Activated naive CD4-positive, alpha-beta T cell treated with anti-CD3 and anti-CD28 coated beads for 36 hours (primary cell): ENCODE measurements at regions of chr6 and their contacts with region 1.

Region 1: GRCh38 chr6:87322304-87323212 is at the start of gene SMIM8:
- DNase-seq: peak; percentile 86
- H3K4me3 Mint-ChIP-seq: peak within 1 kb of the TSS; percentile 98
- H3K27ac Mint-ChIP-seq: peak within 1 kb of the TSS; percentile 85
- H3K4me1 Mint-ChIP-seq: peaks cover 18% of the 10 kb centered on the region
- H3K27me3 Mint-ChIP-seq: no peaks in the 10 kb centered on the region
- total RNA-seq, gene SMIM8: 8.0 to 8.6 TPM

Region 2: DNA sequence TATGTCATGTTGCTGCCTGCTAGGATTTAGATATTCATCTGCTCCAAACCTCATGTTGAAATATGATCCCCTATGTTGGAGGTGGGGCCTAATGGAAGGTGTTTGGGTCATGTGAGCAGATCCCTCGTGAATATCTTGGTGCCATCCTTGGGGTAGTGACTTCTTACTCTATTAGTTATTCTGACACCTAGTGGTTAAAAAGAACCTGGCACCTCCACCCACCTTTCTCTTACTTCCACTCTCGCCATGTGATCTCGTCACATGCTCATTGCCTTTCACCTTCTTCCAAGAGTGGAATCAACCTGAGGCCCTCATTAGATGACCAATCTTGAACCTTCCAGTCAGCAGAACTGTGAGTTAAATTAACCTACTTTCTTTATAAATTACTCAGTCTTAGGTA is 1130.4 kb before region 1 on chr6:
- CTCF ChIA-PET with region 1: no interaction called
- intact Hi-C with region 1: no loop called
- DNase-seq: no peak
- H3K4me3 Mint-ChIP-seq: no peak overlapping the region
- H3K27ac Mint-ChIP-seq: no peak overlapping the region
- H3K4me1 Mint-ChIP-seq: no peaks in the 10 kb centered on the region
- H3K27me3 Mint-ChIP-seq: no peaks in the 10 kb centered on the region

Region 3: DNA sequence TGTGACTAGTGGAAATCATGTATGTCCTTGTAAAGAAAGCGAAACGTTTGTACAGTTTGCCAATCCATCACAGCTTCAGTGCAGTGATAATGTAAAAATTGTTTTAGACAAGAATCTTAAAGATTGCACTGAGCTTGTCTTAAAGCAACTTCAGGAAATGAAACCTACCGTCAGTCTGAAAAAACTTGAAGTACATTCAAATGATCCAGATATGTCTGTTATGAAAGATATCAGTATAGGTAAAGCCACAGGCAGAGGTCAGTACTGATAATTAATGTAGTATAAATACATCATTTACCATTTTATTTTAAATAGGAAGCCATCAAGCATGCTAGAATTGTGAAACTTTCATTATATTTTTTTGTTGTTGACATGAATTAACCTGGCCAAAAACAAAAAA is 61.0 kb before region 1 on chr6:
- CTCF ChIA-PET with region 1: interaction called, 4 read pairs
- intact Hi-C with region 1: loop called (anchors 1 kb)
- DNase-seq: no peak
- H3K4me3 Mint-ChIP-seq: no peak overlapping the region
- H3K27ac Mint-ChIP-seq: no peak overlapping the region
- H3K4me1 Mint-ChIP-seq: peaks cover 15% of the 10 kb centered on the region
- H3K27me3 Mint-ChIP-seq: no peaks in the 10 kb centered on the region

Region 4: DNA sequence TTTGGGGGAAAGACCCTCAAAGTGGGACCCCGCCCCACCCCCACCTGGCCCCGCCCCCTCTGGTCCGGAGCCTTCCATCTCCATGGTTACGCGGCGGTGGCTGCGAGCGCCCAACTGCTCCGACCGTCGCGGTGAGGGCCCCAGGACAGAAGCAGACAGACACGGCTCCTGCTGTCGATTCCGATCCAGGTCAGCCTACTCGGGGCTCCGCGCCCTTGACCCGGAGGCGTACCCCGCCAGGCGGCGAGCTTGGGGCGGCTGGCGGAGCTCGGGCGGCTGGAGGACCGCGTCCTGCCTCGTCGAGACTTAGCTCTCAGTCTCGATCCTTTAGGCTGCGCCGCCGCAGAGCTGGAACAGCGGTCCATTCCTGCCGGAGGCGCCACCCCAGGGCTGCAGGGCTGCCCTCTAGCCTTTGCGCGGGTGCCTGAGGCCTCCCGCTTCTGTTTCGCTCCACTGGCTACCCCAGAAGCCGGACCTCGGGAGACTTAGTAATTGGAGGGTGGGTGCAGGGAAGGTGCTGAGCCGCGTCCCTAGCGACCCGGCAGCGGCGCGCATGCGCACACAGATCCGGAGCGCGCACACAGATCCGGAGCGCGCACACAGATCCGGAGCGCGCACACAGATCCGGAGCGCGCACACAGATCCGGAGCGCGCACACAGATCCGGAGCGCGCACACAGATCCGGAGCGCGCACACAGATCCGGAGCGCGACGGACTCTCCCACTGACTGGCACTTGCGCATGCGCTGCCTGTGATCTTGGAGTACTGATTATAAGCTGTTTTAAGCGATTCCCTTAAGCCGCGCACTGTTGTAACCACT is 85.6 kb after region 1 on chr6 and contains the start of gene CFAP206:
- CTCF ChIA-PET with region 1: interaction called, 3 read pairs
- intact Hi-C with region 1: loop called (anchors 1 kb)
- DNase-seq: peak; percentile 81
- H3K4me3 Mint-ChIP-seq: peak within 1 kb of the TSS; percentile 84
- H3K27ac Mint-ChIP-seq: no peak within 1 kb of the TSS
- H3K4me1 Mint-ChIP-seq: no peaks in the 10 kb centered on the region
- H3K27me3 Mint-ChIP-seq: peaks cover 11% of the 10 kb centered on the region
- total RNA-seq, gene CFAP206: not detected

Region 5: DNA sequence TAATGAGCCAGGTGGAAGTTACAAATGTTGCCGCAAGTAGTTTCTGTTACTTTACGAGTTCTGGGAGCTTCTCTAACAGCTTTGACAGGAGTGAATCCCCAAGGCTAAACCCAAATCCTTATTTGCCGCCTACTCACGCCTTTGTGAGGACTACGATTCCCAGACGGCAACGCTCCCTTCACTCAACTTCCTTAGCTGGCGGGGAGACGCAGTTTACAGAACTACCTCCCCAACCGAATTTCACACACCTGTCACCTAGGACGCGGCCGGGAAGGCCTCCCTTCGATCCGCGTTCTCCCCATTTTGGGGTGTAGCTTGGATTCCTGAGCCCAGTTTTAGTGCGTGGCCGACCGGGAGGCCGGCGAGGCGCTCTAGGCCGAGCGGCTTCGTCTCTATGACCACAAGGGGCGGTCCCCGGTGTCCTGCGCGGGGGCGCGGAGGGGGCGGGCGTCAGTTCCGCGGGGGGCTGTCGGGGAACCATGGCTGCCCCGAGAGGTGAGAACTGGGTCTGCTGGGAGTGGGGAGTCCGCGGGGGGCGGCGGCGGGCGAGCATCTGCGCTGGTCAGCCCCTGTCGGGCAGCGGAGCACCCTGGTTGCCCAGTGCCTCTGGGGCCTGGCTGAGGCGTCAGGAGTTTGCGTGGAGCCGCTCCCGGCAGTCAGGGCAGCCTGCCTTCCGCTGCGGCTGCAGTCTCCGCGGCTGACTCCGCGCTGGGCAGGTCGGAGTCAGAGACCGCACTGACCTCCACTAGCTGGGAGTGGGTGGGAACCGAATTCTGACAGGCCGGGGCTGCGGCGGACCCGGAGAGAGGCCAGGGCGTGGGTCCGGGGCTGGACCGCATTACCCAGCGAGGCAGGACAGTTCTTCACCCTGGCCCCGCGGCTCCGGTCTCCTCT is 150.2 kb after region 1 on chr6 and contains the start of gene SLC35A1:
- CTCF ChIA-PET with region 1: no interaction called
- intact Hi-C with region 1: loop called (anchors 1 kb)
- DNase-seq: peak; percentile 80
- H3K4me3 Mint-ChIP-seq: peak within 1 kb of the TSS; percentile 95
- H3K27ac Mint-ChIP-seq: peak within 1 kb of the TSS; percentile 92
- H3K4me1 Mint-ChIP-seq: peaks cover 15% of the 10 kb centered on the region
- H3K27me3 Mint-ChIP-seq: peaks cover 4% of the 10 kb centered on the region
- total RNA-seq, gene SLC35A1: 6.7 to 6.8 TPM

Region 6: DNA sequence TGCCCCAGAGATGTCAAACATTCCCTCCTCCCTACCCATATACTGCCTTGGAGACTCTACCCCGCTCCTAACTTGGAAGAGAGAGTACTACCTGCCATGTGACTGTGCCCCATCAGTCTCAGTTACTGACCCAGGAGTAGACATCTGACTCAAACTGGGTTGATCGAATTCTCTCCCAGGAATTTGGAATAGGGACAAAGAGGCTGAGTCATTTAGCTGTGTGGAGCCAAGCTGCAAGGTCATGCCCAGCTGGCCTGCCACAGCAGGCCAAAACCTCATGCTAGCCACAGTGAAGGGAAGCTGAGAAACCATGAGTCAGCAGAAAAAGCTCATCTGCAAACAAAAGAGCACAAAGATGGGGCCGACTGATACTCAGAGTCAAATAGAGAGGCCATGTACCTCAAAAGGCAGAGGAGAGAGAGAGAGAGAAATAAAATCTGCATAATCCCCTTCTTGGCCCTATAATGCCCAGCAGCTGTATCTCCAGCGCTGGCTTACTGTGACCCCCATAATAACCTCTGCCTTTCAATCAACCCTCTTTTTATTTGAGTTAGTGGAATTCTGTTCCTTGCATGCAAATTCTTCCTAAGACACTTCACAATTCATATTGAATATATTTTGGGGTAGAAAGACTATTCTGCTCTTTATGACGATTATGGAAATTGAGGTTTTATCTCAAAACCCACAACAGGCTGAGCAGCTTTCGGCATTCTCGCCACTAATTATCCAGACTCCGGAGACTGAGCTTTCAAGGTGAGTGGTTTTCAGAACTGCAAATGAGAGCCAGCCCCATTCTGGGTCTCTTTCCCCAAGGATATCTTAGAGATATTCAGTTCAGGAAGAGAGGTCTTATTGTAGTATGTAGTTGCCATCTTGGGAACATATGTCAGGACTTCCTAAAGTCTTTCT is 400.9 kb after region 1 on chr6:
- CTCF ChIA-PET with region 1: no interaction called
- intact Hi-C with region 1: no loop called
- DNase-seq: no peak
- H3K4me3 Mint-ChIP-seq: no peak overlapping the region
- H3K27ac Mint-ChIP-seq: no peak overlapping the region
- H3K4me1 Mint-ChIP-seq: peaks cover 9% of the 10 kb centered on the region
- H3K27me3 Mint-ChIP-seq: no peaks in the 10 kb centered on the region